ENCODE measurements at regions of chr3 and their contacts with region 1.

Region 1: DNA sequence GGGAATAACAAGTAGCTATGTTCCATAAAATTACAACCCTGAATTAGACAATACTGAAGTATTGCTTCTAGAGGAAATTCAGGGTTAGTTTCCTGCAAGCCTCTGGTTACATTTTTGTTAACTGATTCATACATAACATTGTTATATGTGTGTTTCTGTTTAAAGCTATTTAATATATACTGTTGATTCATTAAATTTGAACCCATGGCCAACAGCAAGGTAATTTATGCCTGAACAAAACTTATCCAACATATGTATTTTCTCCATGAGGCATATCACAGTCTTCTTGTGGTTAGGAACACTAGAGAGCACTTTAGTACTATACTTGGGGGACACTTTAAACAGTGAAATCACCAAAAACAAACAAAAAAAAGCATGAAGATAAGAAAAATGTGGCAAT is 47.7 kb upstream of the PTX3 start:
- DNase-seq: no peak
- ATAC-seq: no peak
- H3K4me3 ChIP-seq: no peak overlapping the region
- H3K4me3 Mint-ChIP-seq: no peak overlapping the region
- H3K27ac ChIP-seq: no peak overlapping the region
- H3K27ac Mint-ChIP-seq: no peak overlapping the region
- H3K4me1 ChIP-seq: no peaks in the 10 kb centered on the region
- H3K4me1 Mint-ChIP-seq: no peaks in the 10 kb centered on the region
- H3K27me3 ChIP-seq: no peaks in the 10 kb centered on the region
- H3K27me3 Mint-ChIP-seq: no peaks in the 10 kb centered on the region

Region 2: DNA sequence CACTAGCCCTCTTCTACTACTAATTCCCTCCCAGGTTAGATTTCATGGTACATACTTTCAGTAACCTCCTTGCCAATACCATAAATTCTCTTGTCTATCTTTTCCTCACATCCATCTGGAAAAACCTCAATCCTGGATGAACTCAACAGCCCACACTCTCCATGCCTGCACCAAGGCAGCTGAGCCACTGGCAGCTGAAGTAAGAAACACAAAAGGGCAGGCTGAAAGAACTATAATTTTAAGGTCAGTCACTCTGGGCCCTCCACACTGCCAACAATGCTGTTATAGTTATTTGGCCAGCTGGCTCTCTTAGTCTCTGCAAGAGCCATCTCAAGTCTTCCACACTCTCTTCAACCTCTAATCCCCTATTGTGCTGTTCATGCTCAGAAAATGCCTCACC is 729.7 kb before region 1 on chr3:
- CTCF ChIA-PET with region 1: no interaction called
- POLR2A ChIA-PET with region 1: interaction called in 1 of 2 experiments, 12 read pairs
- DNase-seq: no peak
- ATAC-seq: no peak
- H3K4me3 ChIP-seq: no peak overlapping the region
- H3K4me3 Mint-ChIP-seq: no peak overlapping the region
- H3K27ac ChIP-seq: no peak overlapping the region
- H3K27ac Mint-ChIP-seq: no peak overlapping the region
- H3K4me1 ChIP-seq: peaks cover 0 to 1% of the 10 kb centered on the region in 2 experiments
- H3K4me1 Mint-ChIP-seq: peaks cover 2 to 21% (median 10%) of the 10 kb centered on the region in 3 donors
- H3K27me3 ChIP-seq: peaks cover 0 to 3% of the 10 kb centered on the region in 2 experiments
- H3K27me3 Mint-ChIP-seq: peaks cover 1 to 2% of the 10 kb centered on the region in 2 donors

Region 3: DNA sequence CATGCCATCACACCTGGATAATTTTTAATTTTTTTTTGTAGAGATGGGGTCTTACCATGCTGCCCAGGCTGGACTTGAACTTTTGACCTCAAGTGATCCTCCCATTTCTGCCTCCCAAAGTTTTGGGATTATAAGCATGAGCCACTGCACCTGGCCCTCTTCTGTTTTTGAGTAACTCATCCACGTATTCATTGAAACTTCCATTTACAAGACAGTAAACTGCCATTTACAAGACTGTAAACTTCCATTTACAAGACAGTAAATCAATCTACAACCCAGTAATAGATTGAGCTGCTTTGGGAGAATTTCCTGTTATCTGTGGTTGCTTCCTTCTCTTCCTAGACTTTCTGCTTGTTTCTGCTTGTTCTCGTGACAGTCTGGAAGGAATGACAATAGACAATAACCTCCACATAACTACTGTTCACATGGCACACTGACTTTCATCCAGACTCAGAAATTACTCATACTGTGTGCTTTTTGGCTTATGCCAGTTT is 114.3 kb before region 1 on chr3:
- CTCF ChIA-PET with region 1: no interaction called
- POLR2A ChIA-PET with region 1: no interaction called
- DNase-seq: no peak
- ATAC-seq: no peak
- H3K4me3 ChIP-seq: no peak overlapping the region
- H3K4me3 Mint-ChIP-seq: no peak overlapping the region
- H3K27ac ChIP-seq: no peak overlapping the region
- H3K27ac Mint-ChIP-seq: no peak overlapping the region
- H3K4me1 ChIP-seq: no peaks in the 10 kb centered on the region
- H3K4me1 Mint-ChIP-seq: no peaks in the 10 kb centered on the region
- H3K27me3 ChIP-seq: no peaks in the 10 kb centered on the region
- H3K27me3 Mint-ChIP-seq: no peaks in the 10 kb centered on the region

Region 4: DNA sequence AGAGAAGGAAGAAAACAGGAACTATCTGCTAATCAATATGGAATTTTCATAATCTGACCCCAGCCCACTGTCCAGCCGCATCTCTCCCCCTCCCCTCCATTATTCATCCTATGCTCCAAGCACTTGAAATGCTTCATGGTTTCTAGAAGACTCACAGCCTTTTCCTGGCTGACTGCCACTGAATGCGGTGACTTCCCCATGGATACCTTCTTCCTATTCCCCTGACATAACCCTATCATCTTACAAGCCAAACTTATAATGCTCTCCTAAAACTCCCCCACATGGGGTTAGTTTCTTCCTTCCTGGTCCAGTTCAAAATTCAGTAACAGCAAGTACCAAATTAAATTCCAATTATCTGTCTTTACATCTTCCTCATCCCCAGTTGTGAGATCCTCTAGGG is 16.5 kb after region 1 on chr3:
- CTCF ChIA-PET with region 1: no interaction called
- POLR2A ChIA-PET with region 1: no interaction called
- DNase-seq: no peak
- ATAC-seq: no peak
- H3K4me3 ChIP-seq: no peak overlapping the region
- H3K4me3 Mint-ChIP-seq: no peak overlapping the region
- H3K27ac ChIP-seq: no peak overlapping the region
- H3K27ac Mint-ChIP-seq: no peak overlapping the region
- H3K4me1 ChIP-seq: no peaks in the 10 kb centered on the region
- H3K4me1 Mint-ChIP-seq: no peaks in the 10 kb centered on the region
- H3K27me3 ChIP-seq: no peaks in the 10 kb centered on the region
- H3K27me3 Mint-ChIP-seq: peaks cover 4 to 9% of the 10 kb centered on the region in 2 donors